ENCODE measurements at regions of chr2 and their contacts with region 1.

Region 1: DNA sequence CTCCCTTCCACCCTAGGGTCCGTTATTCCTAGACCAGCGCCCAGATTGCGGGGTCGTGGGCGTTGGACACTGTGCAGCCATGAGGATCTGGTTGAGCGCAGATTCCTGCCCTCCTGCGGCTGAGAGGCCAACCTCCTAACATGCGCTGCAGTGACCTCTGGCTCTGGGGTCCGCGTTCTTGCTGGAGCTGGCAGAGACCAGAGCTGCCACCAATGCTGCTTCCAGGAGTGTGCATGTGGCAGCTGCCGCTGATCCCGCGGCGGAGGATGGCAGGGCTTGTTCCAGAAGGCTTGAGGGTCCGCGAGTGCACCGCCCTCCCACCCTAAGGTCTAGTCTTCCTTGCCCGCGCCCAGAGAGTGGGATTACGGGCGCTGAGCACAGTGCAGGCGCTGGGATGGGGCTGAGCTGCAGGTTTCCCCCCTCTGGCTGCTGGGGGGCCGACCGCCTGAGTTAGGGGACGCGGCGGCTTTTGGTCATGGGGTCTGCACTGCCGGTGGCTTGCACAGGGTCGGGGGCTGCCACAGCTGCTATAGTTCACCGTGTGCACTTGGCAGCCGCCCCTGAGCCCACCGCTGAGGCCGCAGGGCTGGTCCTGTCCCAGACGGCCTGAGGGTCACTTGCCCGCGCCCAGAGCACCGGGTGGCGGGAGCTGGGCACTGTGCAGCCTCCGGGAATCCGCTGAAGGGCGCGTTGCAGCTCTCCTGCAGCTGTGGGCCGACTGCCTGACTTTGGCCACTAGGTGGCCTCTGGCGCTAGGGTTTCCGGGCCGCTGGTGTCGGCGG is 145.9 kb downstream of the CCDC74A start:
- DNase-seq: peak; percentile 59 to 90 (median 80)
- H3K4me3 ChIP-seq: peak overlapping the region; percentile 33 to 77 (median 58)
- H3K27ac ChIP-seq: peak overlapping the region in 5 of 59 donors; percentile 10 to 62 (median 38)
- H3K27me3 ChIP-seq: peaks cover 0 to 6% (median 0%) of the 10 kb centered on the region in 45 donors
- CTCF ChIP-seq: peak; percentile 76 to 98 (median 93)

Region 2: DNA sequence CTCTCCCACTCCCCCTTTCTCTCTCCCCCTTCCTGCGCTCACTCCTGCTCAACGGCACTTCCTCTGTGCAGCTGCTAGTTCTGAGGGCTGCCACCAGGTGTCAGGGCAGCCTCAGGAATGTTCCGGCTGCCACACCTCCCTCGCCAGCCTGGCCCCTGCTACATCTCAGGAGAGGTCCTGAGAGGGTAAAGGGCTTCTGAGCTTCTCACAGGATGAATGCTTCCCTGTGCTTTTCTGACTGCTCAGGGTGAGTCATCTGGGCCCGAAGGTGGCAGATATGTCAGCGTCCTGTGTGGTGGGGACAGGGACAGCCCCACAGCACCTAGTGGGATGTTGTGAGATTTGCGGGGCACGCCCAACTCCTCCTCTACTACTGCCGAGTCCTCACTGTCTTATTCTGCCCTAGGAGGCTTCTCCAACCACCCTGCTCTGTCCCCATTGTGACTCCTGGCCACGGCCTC is 519.5 kb before region 1 on chr2:
- intact Hi-C with region 1: loop called (anchors 5 kb)
- DNase-seq: peak in 9 of 10 donors; percentile 40 to 80 (median 60)
- H3K4me3 ChIP-seq: no peak overlapping the region
- H3K27ac ChIP-seq: no peak overlapping the region
- H3K27me3 ChIP-seq: no peaks in the 10 kb centered on the region
- CTCF ChIP-seq: peak; percentile 39 to 88 (median 80)

Region 3: DNA sequence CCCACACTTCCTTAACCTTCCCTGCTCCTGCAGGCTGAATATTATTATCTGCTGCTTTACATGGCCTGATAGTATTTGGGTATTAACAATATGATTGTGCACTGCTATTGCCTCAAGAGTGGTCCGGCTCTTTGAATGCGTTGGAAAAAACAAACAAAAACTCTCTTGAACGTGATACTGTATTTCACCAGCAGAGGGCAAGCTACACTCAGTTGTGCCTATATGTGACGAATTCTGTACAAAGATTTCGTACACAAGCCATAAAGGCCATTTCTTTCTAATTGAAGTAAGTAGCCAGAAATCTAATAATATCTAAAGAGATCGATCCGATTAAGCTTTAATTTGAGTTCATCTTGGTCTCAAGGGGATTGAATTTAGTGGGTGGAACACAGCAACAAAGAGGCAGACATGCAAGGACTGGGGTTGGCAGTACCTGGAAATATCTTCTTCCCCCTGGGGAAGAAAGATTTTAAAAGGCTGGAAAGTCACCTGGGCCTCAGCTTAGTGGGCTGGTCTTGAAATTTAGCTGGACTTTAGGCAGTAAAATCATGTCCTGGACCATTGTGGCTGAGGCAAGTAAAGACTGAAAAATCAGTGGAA is 260.3 kb before region 1 on chr2:
- intact Hi-C with region 1: loop called in 1 of 2 experiments (anchors 10 kb)
- DNase-seq: no peak
- H3K4me3 ChIP-seq: peak overlapping the region in 1 of 59 donors; percentile 1
- H3K27ac ChIP-seq: no peak overlapping the region
- H3K27me3 ChIP-seq: peaks cover 0 to 31% (median 9%) of the 10 kb centered on the region in 45 donors
- CTCF ChIP-seq: peak; percentile 58 to 93 (median 82)

Region 4: GRCh38 chr2:131492418-131493198 is 181.0 kb before region 1 on chr2:
- intact Hi-C with region 1: loop called in 1 of 2 experiments (anchors 10 kb)
- DNase-seq: peak; percentile 82 to 91 (median 88)
- H3K4me3 ChIP-seq: peak overlapping the region; percentile 57 to 96 (median 86)
- H3K27ac ChIP-seq: peak overlapping the region; percentile 40 to 96 (median 89)
- H3K27me3 ChIP-seq: no peaks in the 10 kb centered on the region
- CTCF ChIP-seq: peak; percentile 58 to 93 (median 76)

Region 5: DNA sequence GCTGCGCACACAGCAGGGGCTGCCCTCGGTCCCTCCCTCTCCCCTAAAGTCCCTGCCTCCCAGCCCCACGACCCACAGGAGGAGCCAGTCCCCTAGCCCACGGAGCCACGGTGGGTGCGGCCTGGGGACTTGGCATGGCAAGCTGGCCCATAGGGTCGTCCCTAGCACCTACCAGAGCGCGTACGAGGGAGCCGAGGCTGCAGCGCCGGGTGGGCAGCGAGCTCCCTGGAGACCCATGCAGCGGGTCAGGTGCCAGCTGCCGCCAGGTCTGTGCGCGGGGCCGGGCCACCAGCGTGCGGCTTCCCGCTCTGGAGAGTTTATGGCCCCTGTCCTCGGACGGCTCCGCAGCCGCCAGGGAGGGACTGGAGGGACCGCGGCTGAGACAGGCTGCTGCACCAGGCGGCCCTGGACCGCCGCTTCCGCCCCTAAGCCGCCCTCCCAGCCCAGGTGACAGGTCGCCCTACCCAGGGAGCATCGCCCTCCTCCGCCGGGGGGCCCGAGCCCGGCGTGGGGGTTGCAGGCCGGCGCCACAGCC is 127.7 kb after region 1 on chr2:
- intact Hi-C with region 1: loop called in 1 of 2 experiments (anchors 5 kb)
- DNase-seq: no peak
- H3K4me3 ChIP-seq: peak overlapping the region in 49 of 59 donors; percentile 17 to 64 (median 41)
- H3K27ac ChIP-seq: no peak overlapping the region
- H3K27me3 ChIP-seq: peaks cover 0 to 4% (median 0%) of the 10 kb centered on the region in 45 donors
- CTCF ChIP-seq: no peak